IMR-90 (cell line): ENCODE measurements at regions of chr5 and their contacts with region 1.

Region 1: DNA sequence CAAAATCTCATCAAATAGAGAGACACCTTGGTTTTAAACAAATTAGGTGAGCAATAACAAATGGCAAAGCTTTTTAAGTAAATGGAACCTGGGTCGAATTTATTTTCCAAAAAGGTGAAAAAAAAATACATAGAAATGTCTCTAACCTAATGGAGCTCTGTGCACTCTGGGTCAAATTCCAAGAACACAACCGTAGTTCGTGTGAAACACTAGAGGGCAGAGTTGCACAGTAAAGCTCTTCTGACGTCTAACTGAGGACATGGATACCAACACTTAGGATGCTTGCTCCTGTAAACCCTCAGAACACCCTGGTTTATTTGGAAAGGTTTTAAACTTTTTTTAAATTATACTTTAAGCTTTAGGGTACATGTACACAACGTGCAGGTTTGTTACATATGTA is 18.9 kb downstream of the MARCHF11 start:
- DNase-seq: peak; percentile 62
- ATAC-seq: peak; percentile 94
- H3K4me3 ChIP-seq: no peak overlapping the region
- H3K27ac ChIP-seq: no peak overlapping the region
- H3K4me1 ChIP-seq: no peaks in the 10 kb centered on the region
- H3K27me3 ChIP-seq: no peaks in the 10 kb centered on the region
- CTCF ChIP-seq: peak; percentile 60
- POLR2A ChIP-seq: no peak
- RAD21 ChIP-seq: peak; percentile 62

Region 2: DNA sequence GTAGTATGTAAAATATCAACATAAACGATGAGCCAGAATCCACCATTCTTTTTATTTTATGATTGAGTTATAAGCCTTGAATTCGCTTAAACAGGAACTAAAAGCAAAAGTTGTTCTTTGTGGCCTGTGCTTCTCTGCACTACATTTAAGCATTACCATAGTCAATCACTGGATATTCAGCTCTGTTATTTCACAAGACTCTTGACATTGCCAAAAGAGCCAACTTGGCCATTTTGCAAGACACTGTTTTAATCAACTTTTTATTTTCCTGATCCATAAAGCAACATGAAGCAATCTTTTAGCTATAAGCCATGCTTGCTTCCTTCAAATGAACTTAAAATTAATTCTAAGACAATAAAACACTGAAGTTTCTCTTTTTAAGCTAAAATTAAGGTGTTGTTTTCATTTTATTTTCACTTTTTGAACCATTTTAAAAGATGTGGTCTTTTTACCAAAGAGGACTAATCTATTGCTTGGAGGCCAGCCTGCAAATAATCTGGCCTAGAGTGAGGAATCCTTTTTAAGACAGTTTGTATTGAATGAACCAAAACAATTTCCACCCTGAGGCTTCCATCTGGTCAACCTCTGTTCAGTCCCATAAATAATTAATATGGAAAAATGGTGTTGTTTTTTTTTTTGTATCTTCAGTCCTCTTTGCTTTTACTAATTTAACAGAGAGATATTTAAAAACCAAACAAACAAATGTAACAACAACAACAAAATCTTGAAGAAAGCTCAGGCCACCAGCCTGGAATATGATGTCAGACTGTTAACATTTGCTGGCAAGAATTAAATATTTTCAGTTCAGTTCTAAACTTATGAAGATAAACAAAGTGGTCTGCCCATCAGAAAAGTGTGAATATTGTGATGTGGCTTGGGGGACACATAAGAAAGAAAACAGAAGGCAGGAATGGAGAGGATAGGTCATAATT is 255.5 kb before region 1 on chr5:
- CTCF ChIA-PET with region 1: no interaction called
- POLR2A ChIA-PET with region 1: no interaction called
- dilution Hi-C with region 1: no loop called
- in situ Hi-C with region 1: no loop called
- intact Hi-C with region 1: no loop called
- DNase-seq: no peak
- ATAC-seq: peak; percentile 64
- H3K4me3 ChIP-seq: no peak overlapping the region
- H3K27ac ChIP-seq: no peak overlapping the region
- H3K4me1 ChIP-seq: peaks cover 1% of the 10 kb centered on the region; the same call in 1 of the 2 replicates
- H3K27me3 ChIP-seq: no peaks in the 10 kb centered on the region
- CTCF ChIP-seq: no peak
- POLR2A ChIP-seq: no peak
- RAD21 ChIP-seq: no peak

Region 3: GRCh38 chr5:16446993-16447392 is 286.3 kb after region 1 on chr5:
- CTCF ChIA-PET with region 1: no interaction called
- POLR2A ChIA-PET with region 1: no interaction called
- dilution Hi-C with region 1: no loop called
- in situ Hi-C with region 1: loop called (anchors 10 kb)
- intact Hi-C with region 1: no loop called
- DNase-seq: no peak
- ATAC-seq: no peak
- H3K4me3 ChIP-seq: no peak overlapping the region
- H3K27ac ChIP-seq: no peak overlapping the region
- H3K4me1 ChIP-seq: no peaks in the 10 kb centered on the region
- H3K27me3 ChIP-seq: no peaks in the 10 kb centered on the region
- CTCF ChIP-seq: no peak
- POLR2A ChIP-seq: no peak
- RAD21 ChIP-seq: no peak

Region 4: DNA sequence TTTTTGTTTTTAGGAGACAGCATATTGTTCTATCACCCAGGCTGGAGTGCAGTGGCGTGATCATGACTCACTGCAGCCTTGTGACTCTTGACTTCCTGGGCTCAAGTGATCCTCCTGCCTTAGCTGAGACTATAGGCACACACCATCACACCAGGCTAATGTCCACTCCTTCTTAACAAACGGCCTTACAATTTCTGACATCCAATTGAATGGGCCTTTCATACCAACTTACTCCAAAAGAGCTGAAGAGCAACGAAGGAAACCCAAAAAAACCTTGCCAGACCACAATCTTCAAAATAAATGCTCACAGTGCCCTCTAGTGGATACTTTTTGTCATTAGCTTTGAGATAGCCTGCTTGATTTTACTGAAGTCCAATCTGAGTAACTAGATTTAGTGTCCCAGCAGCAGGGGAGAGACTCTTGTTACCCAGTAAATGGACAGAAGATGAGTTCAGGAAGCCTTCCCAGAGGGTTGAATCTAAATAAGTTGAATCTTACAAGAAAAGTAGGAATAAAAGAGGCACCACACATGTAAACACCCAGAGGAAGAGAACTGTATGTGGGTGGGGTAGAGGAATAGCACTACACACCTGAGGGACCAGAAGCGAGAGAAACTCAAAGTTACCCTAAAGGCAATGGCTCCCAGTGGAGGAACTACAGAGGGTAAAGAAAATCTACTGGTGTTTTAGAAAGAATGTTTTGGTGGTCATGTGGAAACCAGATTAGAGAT is 295.6 kb after region 1 on chr5:
- CTCF ChIA-PET with region 1: interaction called, 19 read pairs
- POLR2A ChIA-PET with region 1: no interaction called
- dilution Hi-C with region 1: no loop called
- in situ Hi-C with region 1: no loop called
- intact Hi-C with region 1: loop called (anchors 1 kb)
- DNase-seq: peak; percentile 72
- ATAC-seq: peak; percentile 50
- H3K4me3 ChIP-seq: no peak overlapping the region
- H3K27ac ChIP-seq: 0 out of 2 replicates have a peak overlapping the region, but pooled peaks have one; percentile 50
- H3K4me1 ChIP-seq: peaks cover 11% of the 10 kb centered on the region
- H3K27me3 ChIP-seq: no peaks in the 10 kb centered on the region
- CTCF ChIP-seq: peak; percentile 58
- POLR2A ChIP-seq: no peak
- RAD21 ChIP-seq: peak; percentile 36; the same call in 1 of the 2 replicates

Region 5: GRCh38 chr5:16552666-16553343 is 392.1 kb after region 1 on chr5:
- CTCF ChIA-PET with region 1: no interaction called
- POLR2A ChIA-PET with region 1: no interaction called
- dilution Hi-C with region 1: no loop called
- in situ Hi-C with region 1: no loop called
- intact Hi-C with region 1: loop called (anchors 5 kb)
- DNase-seq: peak; percentile 55
- ATAC-seq: peak; percentile 98
- H3K4me3 ChIP-seq: no peak overlapping the region
- H3K27ac ChIP-seq: no peak overlapping the region
- H3K4me1 ChIP-seq: no peaks in the 10 kb centered on the region
- H3K27me3 ChIP-seq: peaks cover 11% of the 10 kb centered on the region
- CTCF ChIP-seq: peak; percentile 73
- POLR2A ChIP-seq: no peak
- RAD21 ChIP-seq: peak; percentile 62

Region 6: GRCh38 chr5:16666883-16667398 is 506.2 kb after region 1 on chr5:
- CTCF ChIA-PET with region 1: no interaction called
- POLR2A ChIA-PET with region 1: no interaction called
- dilution Hi-C with region 1: no loop called
- in situ Hi-C with region 1: no loop called
- intact Hi-C with region 1: loop called (anchors 10 kb)
- DNase-seq: peak; percentile 15
- ATAC-seq: no peak
- H3K4me3 ChIP-seq: no peak overlapping the region
- H3K27ac ChIP-seq: no peak overlapping the region
- H3K4me1 ChIP-seq: peaks cover 16% of the 10 kb centered on the region
- H3K27me3 ChIP-seq: no peaks in the 10 kb centered on the region
- CTCF ChIP-seq: no peak
- POLR2A ChIP-seq: no peak
- RAD21 ChIP-seq: no peak

Region 7: DNA sequence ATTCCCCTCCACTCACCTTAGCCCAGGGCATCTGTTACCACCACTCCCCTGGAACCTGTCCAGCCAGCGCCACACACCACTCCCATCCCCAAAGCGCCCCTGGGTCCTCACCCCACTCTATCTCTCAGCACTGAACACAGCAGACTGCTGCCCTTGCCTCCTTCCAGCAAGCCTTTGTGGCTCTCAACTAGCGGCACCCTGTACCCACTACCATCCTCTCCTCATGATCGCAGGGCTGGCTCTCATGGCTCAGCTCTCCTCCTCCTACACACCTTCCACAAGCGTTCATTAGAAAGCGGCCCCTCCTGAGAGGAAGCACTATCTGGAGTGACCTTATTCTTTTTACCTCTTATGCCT is 1043.4 kb after region 1 on chr5:
- CTCF ChIA-PET with region 1: interaction called, 3 read pairs
- POLR2A ChIA-PET with region 1: no interaction called
- dilution Hi-C with region 1: no loop called
- in situ Hi-C with region 1: loop called (anchors 10 kb)
- intact Hi-C with region 1: no loop called
- DNase-seq: no peak
- ATAC-seq: no peak
- H3K4me3 ChIP-seq: no peak overlapping the region
- H3K27ac ChIP-seq: no peak overlapping the region
- H3K4me1 ChIP-seq: no peaks in the 10 kb centered on the region; the same call in 1 of the 2 replicates
- H3K27me3 ChIP-seq: no peaks in the 10 kb centered on the region
- CTCF ChIP-seq: no peak
- POLR2A ChIP-seq: no peak
- RAD21 ChIP-seq: no peak